ENCODE measurements at regions of chr12 and their contacts with region 1.

Region 1: DNA sequence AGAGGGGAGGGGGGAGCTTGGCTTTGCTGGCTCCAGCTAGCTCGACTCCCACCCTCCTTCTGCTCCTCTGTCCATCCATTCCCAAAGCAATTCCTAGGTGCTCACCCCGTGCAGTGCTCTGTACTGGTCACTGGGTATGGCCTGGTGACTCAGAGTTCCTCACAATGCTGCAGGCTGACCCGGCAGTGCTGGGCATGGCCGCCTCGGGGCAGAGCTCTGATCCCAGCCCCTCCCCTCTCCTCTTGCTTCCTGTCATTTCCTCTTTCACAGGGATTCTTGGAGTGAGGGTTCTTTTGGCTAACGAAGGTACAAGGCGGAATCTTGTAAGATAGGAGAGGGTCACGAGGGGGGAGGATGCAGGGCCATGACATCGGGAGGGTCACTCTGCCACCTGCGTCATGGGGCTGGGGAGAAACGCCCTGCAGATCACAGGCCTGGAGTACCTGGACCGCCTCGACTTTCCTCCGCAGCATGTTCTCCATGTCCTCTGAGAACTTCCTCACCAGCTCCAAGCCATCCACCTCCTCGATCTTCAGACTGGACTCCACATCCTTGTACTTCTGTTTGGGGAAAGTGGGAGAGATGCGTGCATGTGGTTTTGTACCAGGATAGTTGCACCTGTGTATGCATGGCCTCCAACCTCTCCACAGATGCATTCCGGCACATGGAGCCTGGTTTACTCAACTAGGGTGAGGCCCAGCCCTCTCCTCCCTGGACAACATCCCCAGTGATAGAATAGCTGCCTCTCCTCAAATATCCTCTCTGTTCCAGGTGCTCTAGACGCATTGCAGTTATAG is 5.7 kb downstream of the CACNA2D4 start:
- DNase-seq: no peak
- ATAC-seq: peak in 2 of 4 donors; percentile 38 to 51
- H3K4me3 ChIP-seq: no peak overlapping the region
- H3K27ac ChIP-seq: peak overlapping the region; percentile 90
- H3K4me1 ChIP-seq: peaks cover 17% of the 10 kb centered on the region
- H3K27me3 ChIP-seq: no peaks in the 10 kb centered on the region
- CTCF ChIP-seq: no peak

Region 2: DNA sequence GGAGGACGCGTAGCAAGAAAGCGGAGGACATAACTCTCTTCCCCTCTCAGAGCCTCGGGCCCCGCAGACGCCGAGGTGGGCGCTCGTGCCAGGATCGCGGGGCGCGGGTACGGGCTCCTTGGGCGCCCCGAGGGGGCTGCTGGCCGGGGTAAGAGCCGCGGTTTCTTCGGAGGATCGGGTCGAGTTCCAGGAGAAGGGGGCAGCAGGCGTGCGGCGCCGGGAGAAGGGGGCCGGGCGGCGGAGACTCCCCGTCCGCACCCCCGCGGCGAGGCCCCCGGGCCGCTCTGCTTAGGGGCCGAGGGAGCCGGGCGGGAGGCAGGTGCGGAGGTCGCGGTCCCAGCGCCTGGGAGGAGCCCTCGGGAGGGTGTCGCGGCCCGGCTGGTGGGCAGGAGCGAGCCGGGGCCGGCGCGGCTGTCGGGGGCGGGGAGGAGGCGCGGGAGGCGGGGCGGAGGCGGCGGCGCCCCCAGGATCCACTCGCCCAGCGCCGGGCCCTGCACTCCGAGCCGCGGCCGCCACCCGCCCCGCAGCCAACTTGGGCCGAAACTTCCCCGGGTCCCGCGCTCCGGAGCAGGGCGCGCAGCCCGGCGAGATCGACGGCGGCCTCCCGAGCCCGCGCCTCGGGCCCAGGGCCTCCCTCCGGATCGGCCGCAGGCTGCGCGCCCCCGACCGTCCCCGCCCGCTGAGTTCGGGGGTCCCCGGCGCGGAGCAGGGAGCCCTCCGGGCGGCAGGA is 382.8 kb before region 1 on chr12:
- intact Hi-C with region 1: no loop called
- DNase-seq: peak in 1 of 2 donors; percentile 22
- ATAC-seq: peak in 3 of 4 donors; percentile 25 to 34 (median 33)
- H3K4me3 ChIP-seq: peak overlapping the region; percentile 66
- H3K27ac ChIP-seq: no peak overlapping the region
- H3K4me1 ChIP-seq: peaks cover 9% of the 10 kb centered on the region
- H3K27me3 ChIP-seq: peaks cover 0 to 68% (median 28%) of the 10 kb centered on the region in 3 donors
- CTCF ChIP-seq: no peak

Region 3: GRCh38 chr12:1804545-1805332 is 108.0 kb before region 1 on chr12:
- intact Hi-C with region 1: no loop called
- DNase-seq: peak; percentile 90 to 93
- ATAC-seq: peak; percentile 77 to 94 (median 88)
- H3K4me3 ChIP-seq: no peak overlapping the region
- H3K27ac ChIP-seq: peak overlapping the region; percentile 55
- H3K4me1 ChIP-seq: peaks cover 15% of the 10 kb centered on the region
- H3K27me3 ChIP-seq: no peaks in the 10 kb centered on the region
- CTCF ChIP-seq: no peak

Region 4: GRCh38 chr12:1836849-1837421 is 75.8 kb before region 1 on chr12:
- intact Hi-C with region 1: loop called in 1 of 2 experiments (anchors 5 kb)
- DNase-seq: peak in 1 of 2 donors; percentile 4
- ATAC-seq: no peak
- H3K4me3 ChIP-seq: no peak overlapping the region
- H3K27ac ChIP-seq: no peak overlapping the region
- H3K4me1 ChIP-seq: no peaks in the 10 kb centered on the region
- H3K27me3 ChIP-seq: peaks cover 0 to 9% (median 4%) of the 10 kb centered on the region in 3 donors
- CTCF ChIP-seq: no peak

Measured in psoas muscle (tissue), 8 donors.